Colonic mucosa (tissue), 4 donors: ENCODE measurements at regions of chr3 and their contacts with region 1.

Region 1: GRCh38 chr3:169969174-169970095 is 2.8 kb downstream of the SEC62 start:
- DNase-seq: no peak
- H3K4me3 ChIP-seq: no peak overlapping the region
- H3K27ac ChIP-seq: no peak overlapping the region
- H3K4me1 ChIP-seq: peaks cover 4% of the 10 kb centered on the region
- H3K27me3 ChIP-seq: no peaks in the 10 kb centered on the region
- CTCF ChIP-seq: no peak

Region 2: DNA sequence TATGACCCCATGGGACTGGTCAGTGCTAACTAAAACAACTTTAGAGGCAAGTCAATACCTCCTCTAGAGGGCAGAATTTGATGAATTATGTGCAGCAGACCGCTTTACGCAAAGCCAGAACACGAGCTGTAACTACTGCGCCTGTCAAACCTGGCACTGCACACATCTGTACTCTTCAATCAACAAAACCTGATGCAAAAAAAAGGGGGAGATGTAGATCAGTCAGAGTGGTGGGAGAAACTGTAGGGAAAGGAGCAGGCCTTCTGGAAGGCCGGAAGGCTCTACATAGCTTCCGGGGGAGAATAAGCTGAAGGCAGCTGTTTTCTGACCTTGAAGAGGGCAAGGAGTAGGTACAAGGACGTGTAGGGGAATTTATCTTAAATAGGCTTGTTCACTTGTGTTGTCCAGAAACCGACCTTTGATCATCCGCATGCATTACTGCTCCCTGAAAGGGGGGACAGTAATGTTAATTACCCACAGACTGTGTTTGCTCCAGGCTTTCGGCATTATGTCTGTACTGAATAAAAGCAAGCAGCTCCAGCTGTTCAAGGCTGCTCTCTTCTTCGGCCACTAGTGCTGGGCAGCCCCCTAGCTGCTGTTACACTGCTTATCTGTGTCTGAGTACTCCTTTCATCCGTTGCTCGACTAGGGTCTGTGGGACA is 109.3 kb after region 1 on chr3:
- intact Hi-C with region 1: no loop called
- DNase-seq: no peak
- H3K4me3 ChIP-seq: no peak overlapping the region
- H3K27ac ChIP-seq: no peak overlapping the region
- H3K4me1 ChIP-seq: no peaks in the 10 kb centered on the region
- H3K27me3 ChIP-seq: no peaks in the 10 kb centered on the region
- CTCF ChIP-seq: peak; percentile 5

Region 3: DNA sequence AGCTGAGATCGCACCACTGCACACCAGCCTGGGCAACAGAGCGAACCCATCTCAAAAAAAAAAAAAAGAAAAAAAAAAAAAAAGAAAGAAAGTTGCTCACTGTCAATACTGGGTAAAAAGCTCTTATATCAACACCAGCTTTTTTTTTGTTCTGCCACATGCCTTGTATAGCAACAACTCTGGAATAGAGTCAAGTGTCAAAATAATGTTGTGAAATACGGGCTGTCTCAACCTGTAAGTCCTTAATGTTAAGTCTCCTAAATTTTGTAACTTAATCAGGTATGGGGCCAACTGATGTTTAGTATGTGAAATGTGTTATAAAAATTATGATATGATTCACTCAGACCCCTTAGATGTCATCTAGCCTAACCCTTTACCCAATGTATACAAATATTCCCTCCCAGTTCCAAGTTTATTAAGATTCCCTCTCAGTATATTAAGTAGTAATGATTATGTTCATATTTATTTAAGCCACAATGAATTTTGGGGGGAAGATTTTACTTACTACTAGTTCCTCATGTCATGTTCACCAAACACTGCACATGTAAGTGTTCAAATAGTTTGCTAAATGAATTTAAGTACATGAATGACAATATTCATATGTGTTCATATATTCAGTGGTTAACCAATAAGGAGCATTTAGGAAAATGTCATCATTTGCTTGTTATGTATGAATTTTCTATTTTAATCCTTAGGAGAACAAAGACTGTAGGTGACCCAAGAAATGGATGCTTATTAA is 120.6 kb after region 1 on chr3:
- intact Hi-C with region 1: loop called (anchors 10 kb)
- DNase-seq: no peak
- H3K4me3 ChIP-seq: no peak overlapping the region
- H3K27ac ChIP-seq: no peak overlapping the region
- H3K4me1 ChIP-seq: no peaks in the 10 kb centered on the region
- H3K27me3 ChIP-seq: no peaks in the 10 kb centered on the region
- CTCF ChIP-seq: no peak